MCF 10A (cell line): ENCODE measurements at regions of chr10 and their contacts with region 1.

Region 1: DNA sequence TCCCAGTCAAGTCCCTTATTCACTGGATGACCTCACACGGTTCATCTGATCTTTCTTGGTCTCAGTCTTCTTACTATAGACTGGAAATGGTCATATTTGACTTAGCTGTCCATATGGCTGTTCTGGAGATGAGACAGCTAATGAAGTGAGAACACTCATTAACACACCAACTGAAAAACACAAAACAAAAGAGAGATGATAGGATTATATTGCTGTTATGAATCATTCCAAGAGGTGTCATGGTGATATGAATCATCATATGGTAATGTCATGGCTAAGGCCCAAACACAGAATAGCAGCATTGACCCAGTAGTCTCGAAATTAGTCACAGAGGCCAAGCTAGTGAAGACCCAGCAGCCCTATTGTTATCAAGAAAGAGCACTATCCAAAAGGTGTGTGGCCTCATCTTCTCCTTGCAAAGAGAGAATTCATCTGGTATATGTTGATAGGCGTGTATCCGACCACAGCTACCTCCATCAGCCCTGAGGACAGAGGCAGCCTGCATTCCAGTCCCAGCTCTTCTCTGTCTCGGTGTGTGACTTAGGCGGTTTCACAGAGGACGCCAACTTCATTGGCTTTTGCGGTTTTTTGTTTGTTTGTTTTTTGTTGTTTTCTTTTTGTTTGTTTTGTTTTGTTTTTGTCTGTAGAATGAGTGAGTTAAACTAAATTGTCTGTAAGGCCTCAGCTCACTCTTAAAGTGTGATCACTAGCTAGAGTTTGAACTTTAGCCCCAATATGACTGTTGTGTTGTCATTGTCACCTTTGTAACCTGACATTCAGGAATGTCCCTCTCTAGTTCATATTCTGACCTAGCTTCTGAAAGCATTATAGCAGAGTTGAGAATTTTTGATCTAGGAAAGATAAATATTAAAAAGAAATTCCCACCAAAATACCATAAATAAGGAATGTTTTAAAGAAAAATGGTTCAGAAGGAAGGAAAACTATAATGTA is 97.4 kb upstream of the PDCD4 start:
- DNase-seq: peak; percentile 89
- H3K4me3 Mint-ChIP-seq: no peak overlapping the region
- H3K27ac Mint-ChIP-seq: peak overlapping the region; percentile 94
- H3K4me1 Mint-ChIP-seq: peaks cover 28% of the 10 kb centered on the region
- H3K27me3 Mint-ChIP-seq: no peaks in the 10 kb centered on the region
- CTCF ChIP-seq: no peak

Region 2: GRCh38 chr10:110724116-110724921 is 50.0 kb before region 1 on chr10:
- CTCF ChIA-PET with region 1: no interaction called
- POLR2A ChIA-PET with region 1: no interaction called
- intact Hi-C with region 1: no loop called
- DNase-seq: no peak
- H3K4me3 Mint-ChIP-seq: no peak overlapping the region
- H3K27ac Mint-ChIP-seq: no peak overlapping the region
- H3K4me1 Mint-ChIP-seq: peaks cover 11% of the 10 kb centered on the region
- H3K27me3 Mint-ChIP-seq: no peaks in the 10 kb centered on the region
- CTCF ChIP-seq: no peak

Region 3: GRCh38 chr10:110756876-110757275 is 17.5 kb before region 1 on chr10:
- CTCF ChIA-PET with region 1: no interaction called
- POLR2A ChIA-PET with region 1: no interaction called
- intact Hi-C with region 1: no loop called
- DNase-seq: no peak
- H3K4me3 Mint-ChIP-seq: no peak overlapping the region
- H3K27ac Mint-ChIP-seq: no peak overlapping the region
- H3K4me1 Mint-ChIP-seq: peaks cover 5% of the 10 kb centered on the region
- H3K27me3 Mint-ChIP-seq: no peaks in the 10 kb centered on the region
- CTCF ChIP-seq: no peak

Region 4: DNA sequence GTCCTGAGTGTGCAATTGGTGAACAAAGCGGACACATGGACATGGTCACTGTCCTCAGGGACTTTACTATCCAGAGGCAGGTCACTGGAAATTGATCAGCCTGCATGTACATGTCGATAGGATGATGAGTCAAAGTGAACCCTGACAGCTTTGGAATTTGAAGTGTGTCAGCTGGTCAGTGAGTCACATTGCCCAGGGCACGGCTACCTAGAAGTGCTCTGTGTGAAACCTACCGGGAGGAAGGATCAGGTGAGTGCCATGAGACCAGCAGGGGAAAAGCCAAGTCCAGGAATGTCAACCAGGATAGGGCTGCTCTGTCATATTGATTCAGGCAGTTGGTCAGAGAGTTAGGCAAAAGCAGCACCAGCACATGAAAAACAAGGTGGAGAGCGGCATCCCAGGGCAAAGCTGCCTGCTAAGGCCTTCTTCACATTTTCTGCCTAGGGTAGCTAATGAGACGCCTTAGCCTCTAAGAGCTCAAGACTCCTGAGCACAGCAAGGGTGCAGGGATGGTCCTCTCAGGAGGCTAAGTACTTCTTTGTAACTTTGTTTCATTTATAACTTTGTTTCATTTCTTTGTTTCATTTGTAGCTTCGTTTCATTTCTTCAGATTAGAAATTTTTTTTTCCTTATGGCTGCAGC is 78.0 kb after region 1 on chr10:
- CTCF ChIA-PET with region 1: interaction called, 5 read pairs
- POLR2A ChIA-PET with region 1: interaction called, 16 read pairs
- intact Hi-C with region 1: no loop called
- DNase-seq: peak; percentile 86
- H3K4me3 Mint-ChIP-seq: no peak overlapping the region
- H3K27ac Mint-ChIP-seq: peak overlapping the region; percentile 36
- H3K4me1 Mint-ChIP-seq: peaks cover 36% of the 10 kb centered on the region
- H3K27me3 Mint-ChIP-seq: no peaks in the 10 kb centered on the region
- CTCF ChIP-seq: no peak

Region 5: DNA sequence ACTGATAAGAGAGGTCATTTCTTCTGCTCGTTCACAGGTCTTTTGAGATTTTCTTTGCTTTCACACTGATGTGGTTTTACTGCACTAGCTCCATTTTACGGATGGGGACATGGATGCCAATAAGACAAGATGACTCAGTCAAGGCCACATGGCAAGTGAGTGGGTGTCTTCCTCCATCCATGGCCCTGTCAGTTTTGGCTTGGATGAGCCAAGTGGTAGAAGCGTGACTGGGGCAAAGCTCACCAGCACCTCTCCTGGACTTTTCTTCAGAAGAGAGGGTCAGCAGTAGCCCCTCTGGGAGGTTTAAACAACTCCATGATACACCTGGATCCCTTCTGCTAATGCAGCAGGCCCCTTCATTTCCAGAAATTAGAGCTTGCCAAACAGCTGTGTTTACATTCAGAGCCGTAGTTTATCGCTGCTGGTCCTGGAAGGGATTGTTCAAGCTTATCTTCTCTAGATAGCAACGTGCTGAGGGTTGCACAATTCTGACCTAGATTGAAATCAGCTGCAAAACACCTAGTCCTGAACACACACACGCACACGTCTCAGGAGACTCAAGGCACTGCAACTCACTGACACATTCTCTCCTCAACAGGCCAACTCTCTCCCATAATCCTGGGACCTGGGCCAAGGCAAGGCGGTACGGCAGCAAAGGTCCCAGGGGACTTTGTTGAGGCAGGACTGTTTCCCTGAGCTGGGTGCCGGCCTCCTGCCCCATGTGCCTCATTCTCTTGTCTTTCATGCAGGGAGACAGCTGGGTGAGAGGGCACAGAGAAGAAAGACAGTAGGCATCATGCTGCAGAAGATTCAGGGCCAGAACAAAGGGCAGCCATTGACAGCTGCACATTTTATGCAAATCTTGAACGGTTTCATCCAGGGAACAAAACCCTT is 83.2 kb after region 1 on chr10:
- CTCF ChIA-PET with region 1: no interaction called
- POLR2A ChIA-PET with region 1: interaction called, 16 read pairs
- intact Hi-C with region 1: no loop called
- DNase-seq: peak; percentile 52
- H3K4me3 Mint-ChIP-seq: no peak overlapping the region
- H3K27ac Mint-ChIP-seq: peak overlapping the region; percentile 39
- H3K4me1 Mint-ChIP-seq: peaks cover 48% of the 10 kb centered on the region
- H3K27me3 Mint-ChIP-seq: no peaks in the 10 kb centered on the region
- CTCF ChIP-seq: no peak